Right ventricle myocardium inferior (tissue), 1 donor: ENCODE measurements at regions of chr13 and their contacts with region 1.

Region 1: DNA sequence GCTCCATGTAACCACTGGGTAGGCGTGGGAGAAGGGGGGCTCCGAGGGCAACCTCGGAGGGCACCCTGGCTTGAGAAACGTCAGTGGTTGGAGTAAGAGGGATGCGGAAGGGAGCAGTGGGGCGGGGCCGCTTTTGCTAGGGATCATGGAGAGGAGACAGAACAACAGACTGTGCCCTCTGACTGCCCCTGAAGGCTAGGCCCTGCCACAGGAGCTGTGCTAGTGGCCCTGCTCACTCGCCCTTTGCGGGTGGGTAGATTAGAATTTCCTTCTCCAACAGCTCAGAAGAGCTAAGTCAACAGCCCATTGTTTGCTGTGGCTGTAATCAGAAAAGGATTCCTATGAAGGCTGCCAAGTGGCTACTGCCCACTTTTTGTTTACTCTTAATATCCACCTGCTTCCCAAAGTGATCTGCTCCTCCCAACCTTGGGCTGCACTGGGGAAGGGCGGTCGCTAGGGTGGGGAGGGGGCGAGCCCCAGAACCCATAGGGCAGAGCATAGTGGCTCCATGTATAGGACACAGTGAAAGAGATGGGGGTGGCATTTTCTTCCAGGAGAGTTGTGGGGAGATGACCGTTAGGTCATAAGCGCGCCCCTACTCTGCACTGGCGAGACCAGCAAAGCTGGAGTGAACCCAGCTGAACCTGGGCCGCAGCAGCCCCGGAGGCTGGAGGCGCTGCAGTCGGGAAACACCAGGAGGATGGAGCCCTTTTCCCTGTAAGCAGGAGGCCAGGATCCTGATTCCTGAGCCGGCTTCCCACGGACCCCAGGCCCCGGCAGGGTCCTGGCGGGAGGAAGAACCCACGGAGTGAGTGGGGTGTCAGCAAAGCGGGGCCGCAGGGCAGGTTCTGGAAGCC is 1.9 kb upstream of the C1QTNF9 start:
- DNase-seq: no peak
- ATAC-seq: no peak

Region 2: DNA sequence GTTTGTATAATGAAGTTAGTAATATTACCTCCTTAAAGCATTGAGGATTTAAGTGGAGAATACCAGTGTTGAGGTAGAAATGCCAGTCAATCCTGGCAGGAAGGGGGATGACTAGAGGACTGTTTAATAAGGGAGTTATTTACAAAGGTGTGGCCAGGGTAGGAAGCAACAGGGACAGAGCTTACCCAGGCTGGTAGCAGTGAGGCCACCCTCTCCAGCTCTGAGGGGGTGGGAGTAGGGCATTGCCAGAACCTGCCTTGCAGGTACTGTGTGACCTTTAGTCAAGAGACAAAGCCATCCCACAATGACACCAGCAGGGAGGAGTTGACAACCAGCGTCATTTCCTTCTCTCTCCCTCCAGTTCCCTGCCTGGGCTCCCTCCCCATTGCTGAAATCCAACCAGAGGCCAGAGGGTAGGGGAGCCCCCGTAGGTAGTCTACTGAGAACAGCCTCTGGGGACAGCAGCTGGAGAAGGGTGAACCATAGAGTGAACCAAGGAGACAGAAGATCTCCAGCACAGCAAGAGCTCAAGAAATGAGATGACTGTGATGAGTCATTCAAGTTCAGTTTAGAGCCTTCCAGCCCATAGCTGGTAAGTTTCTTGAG is 180.3 kb before region 1 on chr13:
- intact Hi-C with region 1: no loop called
- DNase-seq: no peak
- ATAC-seq: no peak

Region 3: GRCh38 chr13:24264976-24265375 is 42.5 kb before region 1 on chr13:
- intact Hi-C with region 1: loop called (anchors 5 kb)
- DNase-seq: no peak
- ATAC-seq: no peak

Region 4: DNA sequence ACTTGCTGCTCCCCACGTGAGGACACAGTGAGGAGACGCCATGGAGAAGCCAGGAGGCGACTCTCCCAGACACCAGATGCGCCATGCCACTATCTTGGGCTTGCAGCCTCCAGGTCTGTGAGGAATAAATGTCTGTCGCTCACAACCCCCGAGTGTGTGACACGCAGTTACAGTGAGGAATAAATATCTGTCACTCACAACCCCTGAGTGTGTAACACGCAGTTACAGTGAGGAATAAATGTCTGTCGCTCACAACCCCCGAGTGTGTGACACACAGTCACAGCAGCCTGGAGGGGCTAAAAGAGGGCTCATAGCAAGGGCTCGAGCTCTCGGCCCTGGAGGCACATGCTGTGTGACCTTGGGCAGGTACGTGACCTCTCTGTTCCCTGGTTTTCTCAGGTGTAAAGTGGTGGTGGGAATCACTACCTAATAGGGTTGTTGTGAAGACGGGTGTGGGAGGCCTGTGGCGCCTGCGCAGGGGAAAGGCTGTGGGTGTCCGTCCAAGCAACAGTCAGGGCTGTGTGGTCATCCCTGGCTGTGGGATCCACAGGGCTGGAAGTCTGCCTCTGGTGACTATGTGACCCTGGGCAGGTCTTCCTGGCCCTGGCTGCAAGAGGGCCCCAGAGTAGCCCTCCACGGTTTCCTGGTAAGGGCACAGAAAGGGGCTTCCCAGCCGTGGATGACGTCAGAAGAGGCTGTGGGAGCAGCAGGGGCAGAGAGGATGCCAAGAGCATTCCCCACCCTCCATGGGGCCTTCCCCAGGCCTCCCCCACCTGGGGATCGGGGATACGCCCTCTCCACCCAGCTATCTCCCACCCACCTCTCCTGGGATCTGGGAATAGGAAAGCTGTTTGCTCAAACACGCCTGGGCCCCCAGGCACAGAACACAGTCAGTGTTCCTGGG is 79.6 kb after region 1 on chr13:
- intact Hi-C with region 1: no loop called
- DNase-seq: peak; percentile 39
- ATAC-seq: no peak